Gastrocnemius medialis (tissue), 4 donors: ENCODE measurements at regions of chr6 and their contacts with region 1.

Region 1: GRCh38 chr6:156776840-156777576 is at the start of gene ARID1B:
- DNase-seq: peak; percentile 74 to 84
- ATAC-seq: peak; percentile 45 to 55
- H3K4me3 ChIP-seq: peak within 1 kb of the TSS; percentile 76 to 89 (median 81)
- H3K27ac ChIP-seq: peak within 1 kb of the TSS; percentile 96 to 98 (median 98)
- H3K4me1 ChIP-seq: peaks cover 31 to 38% of the 10 kb centered on the region in 2 donors
- H3K27me3 ChIP-seq: no peaks in the 10 kb centered on the region
- CTCF ChIP-seq: no peak
- POLR2A ChIP-seq: peak; percentile 65 to 69
- total RNA-seq, gene ARID1B: 54.9 to 75.3 (median 62.0) TPM

Region 2: DNA sequence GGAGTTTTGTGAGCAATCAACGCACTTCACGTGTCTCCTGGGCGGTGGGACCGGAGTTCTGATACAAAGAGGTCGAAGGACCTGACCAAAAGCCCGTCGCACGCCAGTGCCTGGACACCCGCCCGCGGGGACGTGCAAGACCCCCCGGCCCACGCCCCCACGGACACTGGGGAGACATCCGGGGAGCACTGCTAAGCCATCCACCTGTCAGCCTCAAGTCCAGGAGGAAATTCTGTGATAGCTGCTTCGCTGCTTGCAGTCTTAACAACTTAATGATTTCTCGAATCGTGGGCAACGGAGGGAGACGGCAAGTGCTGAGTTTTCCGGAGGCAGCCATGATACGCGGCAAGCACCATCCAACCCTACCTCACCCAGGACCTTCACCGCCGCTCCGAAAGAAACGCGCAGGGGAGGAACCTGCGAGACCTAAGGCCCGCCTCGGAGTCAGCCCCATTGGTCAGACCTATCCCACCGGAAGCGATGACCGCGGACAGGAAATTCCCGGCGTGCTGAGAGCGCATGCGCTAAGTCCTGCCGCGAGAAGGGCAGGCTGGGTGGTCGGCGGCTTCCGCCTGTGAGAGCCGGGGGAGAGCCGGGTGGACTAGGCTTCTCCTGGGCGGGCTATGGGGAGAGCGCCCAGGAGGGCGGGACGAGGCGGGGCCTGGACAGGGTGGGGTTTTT is 1462.8 kb before region 1 on chr6 and contains the start of gene TFB1M:
- in situ Hi-C with region 1: loop called in 1 of 4 experiments (anchors 25 kb)
- intact Hi-C with region 1: loop called (anchors 10 kb)
- DNase-seq: peak; percentile 98
- ATAC-seq: peak; percentile 90 to 91
- H3K4me3 ChIP-seq: peak within 1 kb of the TSS; percentile 84 to 95 (median 88)
- H3K27ac ChIP-seq: peak within 1 kb of the TSS; percentile 87 to 93 (median 91)
- H3K4me1 ChIP-seq: peaks cover 3 to 11% of the 10 kb centered on the region in 2 donors
- H3K27me3 ChIP-seq: no peaks in the 10 kb centered on the region
- CTCF ChIP-seq: no peak
- POLR2A ChIP-seq: peak; percentile 94
- total RNA-seq, gene TFB1M: 13.4 to 34.4 (median 29.2) TPM

Region 3: GRCh38 chr6:156719720-156720563 is 57.1 kb before region 1 on chr6:
- in situ Hi-C with region 1: no loop called
- intact Hi-C with region 1: loop called (anchors 1 kb)
- DNase-seq: peak; percentile 90 to 93
- ATAC-seq: peak; percentile 82 to 88
- H3K4me3 ChIP-seq: peak overlapping the region; percentile 34 to 52 (median 46)
- H3K27ac ChIP-seq: peak overlapping the region; percentile 89 to 96 (median 96)
- H3K4me1 ChIP-seq: peaks cover 21 to 27% of the 10 kb centered on the region in 2 donors
- H3K27me3 ChIP-seq: no peaks in the 10 kb centered on the region
- CTCF ChIP-seq: no peak
- POLR2A ChIP-seq: peak; percentile 53 to 79

Region 4: DNA sequence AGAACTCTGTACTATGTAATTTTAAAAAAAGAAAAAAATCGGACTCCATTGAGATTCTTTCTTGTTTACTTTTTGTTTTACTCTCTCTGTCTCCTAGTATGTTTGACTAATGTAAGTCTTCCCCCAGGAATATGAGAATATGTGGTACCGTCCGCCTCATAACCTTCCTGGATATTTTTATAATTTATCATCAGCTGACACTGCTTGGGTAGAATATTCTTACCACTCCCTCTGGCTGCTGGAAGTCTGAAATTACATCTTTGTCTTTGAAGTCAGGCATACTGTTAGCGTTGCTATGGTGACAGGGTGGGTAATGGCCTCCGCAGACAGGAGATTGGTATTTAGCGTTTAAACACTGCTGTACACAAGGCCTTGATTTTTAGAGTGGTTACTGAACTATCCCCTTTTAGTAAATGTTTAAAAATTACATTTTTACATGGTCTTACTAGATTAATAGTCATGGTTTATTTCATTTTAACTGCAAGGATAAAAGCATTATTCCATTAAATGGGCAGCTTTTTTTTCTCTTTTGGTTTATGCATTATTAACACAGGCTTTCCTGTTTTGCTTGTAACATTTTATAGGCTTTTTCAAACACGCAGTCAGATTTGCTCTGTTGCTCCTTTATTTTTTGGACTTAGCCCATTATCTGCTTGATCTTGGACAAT is 176.6 kb after region 1 on chr6:
- in situ Hi-C with region 1: loop called in 3 of 4 experiments (anchors 10 to 25 kb)
- intact Hi-C with region 1: loop called (anchors 5 kb)
- DNase-seq: peak; percentile 62 to 76
- ATAC-seq: peak; percentile 81 to 84
- H3K4me3 ChIP-seq: peak overlapping the region in 3 of 4 donors; percentile 1 to 19 (median 7)
- H3K27ac ChIP-seq: peak overlapping the region; percentile 81 to 92 (median 88)
- H3K4me1 ChIP-seq: peaks cover 90 to 92% of the 10 kb centered on the region in 2 donors
- H3K27me3 ChIP-seq: no peaks in the 10 kb centered on the region
- CTCF ChIP-seq: peak in 4 of 5 experiments; percentile 17 to 42 (median 30)
- POLR2A ChIP-seq: peak in 1 of 2 donors; percentile 75

Region 5: GRCh38 chr6:157184202-157185020 is 407.4 kb after region 1 on chr6:
- in situ Hi-C with region 1: loop called in 1 of 4 experiments (anchors 10 kb)
- intact Hi-C with region 1: loop called (anchors 10 kb)
- DNase-seq: peak; percentile 41 to 65
- ATAC-seq: peak; percentile 22 to 40
- H3K4me3 ChIP-seq: no peak overlapping the region
- H3K27ac ChIP-seq: peak overlapping the region in 3 of 4 donors; percentile 9 to 46 (median 24)
- H3K4me1 ChIP-seq: peaks cover 26 to 27% of the 10 kb centered on the region in 2 donors
- H3K27me3 ChIP-seq: no peaks in the 10 kb centered on the region
- CTCF ChIP-seq: peak; percentile 83 to 92 (median 90)
- POLR2A ChIP-seq: no peak